ENCODE measurements at regions of chr6 and their contacts with region 1.

Region 1: DNA sequence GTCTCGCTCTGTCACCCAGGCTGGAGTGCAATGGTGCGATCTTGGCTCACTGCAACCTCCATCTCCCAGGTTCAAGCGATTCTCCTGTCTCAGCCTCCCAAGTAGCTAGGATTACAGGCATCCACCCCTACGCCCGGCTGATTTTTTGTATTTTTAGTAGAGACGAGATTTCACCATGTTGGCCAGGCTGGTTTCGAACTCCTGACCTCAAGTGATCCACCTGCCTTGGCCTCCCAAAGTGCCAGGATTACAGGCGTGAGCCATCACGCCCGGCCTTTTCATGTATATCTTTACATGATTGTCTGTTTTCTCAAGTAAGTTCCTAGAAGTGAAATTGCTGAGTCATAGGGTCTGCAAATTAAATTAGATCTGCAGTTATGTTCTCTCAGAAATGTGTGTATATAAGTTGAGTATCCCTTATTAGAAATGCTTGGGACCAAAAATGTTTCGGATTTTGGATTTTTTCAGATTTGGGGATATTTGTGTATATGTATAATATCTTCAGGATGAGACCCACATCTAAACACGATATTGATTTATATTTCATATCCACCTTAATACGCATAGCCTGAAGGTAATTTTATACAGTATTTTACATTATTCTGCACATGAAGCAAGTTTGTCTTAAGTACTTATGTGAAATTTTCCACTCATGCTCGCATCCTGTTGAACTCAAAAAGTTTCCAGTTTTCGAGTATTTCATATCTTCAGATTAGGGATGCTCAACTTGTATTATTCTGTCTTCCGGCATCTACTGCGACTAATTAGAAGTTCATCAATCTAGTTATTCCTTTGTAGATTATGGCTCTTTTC is 40.4 kb downstream of the TAB2 start:
- DNase-seq: peak in 1 of 4 experiments; percentile 68
- ATAC-seq: peak; percentile 50
- H3K4me3 ChIP-seq: no peak overlapping the region
- H3K27ac ChIP-seq: no peak overlapping the region
- H3K4me1 ChIP-seq: peaks cover 6 to 16% of the 10 kb centered on the region in 2 experiments; a peak in 4 of 5 replicates
- H3K27me3 ChIP-seq: no peaks in the 10 kb centered on the region
- CTCF ChIP-seq: no peak
- EP300 ChIP-seq: no peak
- POLR2A ChIP-seq: no peak
- RAD21 ChIP-seq: no peak

Region 2: DNA sequence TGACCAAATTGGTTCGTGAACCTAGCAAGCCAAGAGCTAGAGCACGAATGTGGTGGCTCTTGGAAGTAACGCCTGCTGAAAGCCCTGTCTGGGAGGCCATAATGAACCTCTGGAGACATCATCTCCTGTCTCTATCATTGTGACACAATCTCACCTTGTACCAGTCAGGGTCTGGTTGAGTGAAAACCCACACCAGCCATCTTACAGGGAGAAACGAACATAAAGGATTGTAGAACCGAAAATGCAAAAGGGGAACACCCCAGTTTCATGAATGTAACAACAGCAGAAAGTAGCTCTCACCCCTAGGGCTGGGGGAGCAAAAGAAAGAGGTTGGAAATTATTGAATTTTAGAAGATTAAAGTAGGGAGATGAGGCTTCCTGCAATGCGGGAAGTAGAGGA is 91.3 kb before region 1 on chr6:
- CTCF ChIA-PET with region 1: no interaction called
- POLR2A ChIA-PET with region 1: no interaction called
- in situ Hi-C with region 1: no loop called
- intact Hi-C with region 1: no loop called
- DNase-seq: no peak
- ATAC-seq: no peak
- H3K4me3 ChIP-seq: no peak overlapping the region
- H3K27ac ChIP-seq: no peak overlapping the region
- H3K4me1 ChIP-seq: no peaks in the 10 kb centered on the region
- H3K27me3 ChIP-seq: peaks cover 43 to 50% of the 10 kb centered on the region in 2 experiments
- CTCF ChIP-seq: no peak
- EP300 ChIP-seq: no peak
- POLR2A ChIP-seq: no peak
- RAD21 ChIP-seq: no peak

Region 3: GRCh38 chr6:149324428-149324827 is 33.5 kb before region 1 on chr6:
- CTCF ChIA-PET with region 1: no interaction called
- POLR2A ChIA-PET with region 1: interaction called, 5 read pairs
- in situ Hi-C with region 1: no loop called
- intact Hi-C with region 1: loop called (anchors 5 kb)
- DNase-seq: no peak
- ATAC-seq: 0 out of 3 replicates have a peak, but pooled peaks have one; percentile 14
- H3K4me3 ChIP-seq: no peak overlapping the region
- H3K27ac ChIP-seq: no peak overlapping the region
- H3K4me1 ChIP-seq: peaks cover 4 to 8% of the 10 kb centered on the region in 2 experiments; a peak in 4 of 5 replicates
- H3K27me3 ChIP-seq: no peaks in the 10 kb centered on the region
- CTCF ChIP-seq: no peak
- EP300 ChIP-seq: no peak
- POLR2A ChIP-seq: no peak
- RAD21 ChIP-seq: no peak